Mammary epithelial cell (primary cell): ENCODE measurements at regions of chr1 and their contacts with region 1.

Region 1: GRCh38 chr1:31789259-31790065 is 25.3 kb upstream of the ADGRB2 start:
- DNase-seq: peak; percentile 75
- H3K4me3 ChIP-seq: peak overlapping the region; percentile 52 to 66 (median 60)
- H3K27ac ChIP-seq: no peak overlapping the region
- H3K4me1 ChIP-seq: peaks cover 13% of the 10 kb centered on the region
- H3K27me3 ChIP-seq: no peaks in the 10 kb centered on the region
- CTCF ChIP-seq: peak; percentile 79 to 98

Region 2: DNA sequence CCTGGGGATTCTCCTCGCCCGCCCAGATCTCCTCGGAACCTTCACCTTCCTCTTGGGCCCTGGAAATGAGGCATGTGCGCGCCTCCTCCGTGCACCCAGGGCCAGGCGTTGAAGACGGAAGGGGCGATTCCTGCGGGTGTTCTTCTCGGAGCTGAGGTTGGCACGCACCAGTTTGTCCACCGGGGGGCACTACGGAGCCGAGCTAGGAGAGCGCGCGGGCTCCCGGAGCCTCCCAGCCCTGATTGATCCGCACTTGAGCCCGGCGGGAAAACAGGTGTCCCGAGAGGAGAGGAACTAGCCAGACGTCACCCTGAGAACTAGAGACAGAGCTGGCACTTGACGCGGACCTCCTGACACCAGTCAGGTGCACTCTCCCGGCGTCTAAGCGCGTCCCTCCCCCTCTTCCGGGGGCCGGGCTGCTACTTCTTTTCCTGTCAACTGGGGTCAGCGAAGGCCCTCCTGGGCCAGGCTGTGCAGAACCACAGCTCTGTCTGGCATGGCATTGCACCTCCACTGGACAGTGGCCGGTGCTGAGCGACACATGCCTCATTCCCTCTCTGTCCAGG is 394.8 kb before region 1 on chr1:
- CTCF ChIA-PET with region 1: no interaction called
- dilution Hi-C with region 1: no loop called
- in situ Hi-C with region 1: no loop called
- intact Hi-C with region 1: loop called (anchors 2 kb)
- DNase-seq: peak; percentile 87
- H3K4me3 ChIP-seq: no peak overlapping the region
- H3K27ac ChIP-seq: no peak overlapping the region
- H3K4me1 ChIP-seq: peaks cover 42% of the 10 kb centered on the region
- H3K27me3 ChIP-seq: no peaks in the 10 kb centered on the region
- CTCF ChIP-seq: peak; percentile 83 to 95

Region 3: DNA sequence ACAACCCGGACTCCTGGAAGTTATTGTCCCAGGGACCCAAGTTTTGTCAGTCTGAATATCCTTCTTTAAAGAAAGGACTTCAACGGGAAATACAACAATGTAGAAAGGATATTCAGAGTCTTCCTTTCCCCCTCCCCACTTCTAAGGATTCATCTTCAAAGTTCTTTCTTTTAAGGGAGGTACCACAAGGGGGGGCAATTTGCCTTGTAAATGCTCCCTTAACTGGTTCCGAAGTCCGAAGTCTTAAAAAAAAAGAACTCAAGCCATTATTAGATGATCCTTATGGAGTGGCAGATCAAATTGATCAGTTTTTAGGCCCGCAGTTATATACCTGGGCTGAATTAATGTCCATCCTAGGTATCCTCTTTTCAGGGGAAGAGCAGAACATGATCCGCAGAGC is 329.4 kb before region 1 on chr1:
- CTCF ChIA-PET with region 1: no interaction called
- dilution Hi-C with region 1: no loop called
- in situ Hi-C with region 1: no loop called
- intact Hi-C with region 1: loop called (anchors 1 kb)
- DNase-seq: no peak
- H3K4me3 ChIP-seq: no peak overlapping the region
- H3K27ac ChIP-seq: no peak overlapping the region
- H3K4me1 ChIP-seq: no peaks in the 10 kb centered on the region
- H3K27me3 ChIP-seq: no peaks in the 10 kb centered on the region
- CTCF ChIP-seq: peak in 1 of 2 donors; percentile 20

Region 4: GRCh38 chr1:31576201-31576669 is 213.2 kb before region 1 on chr1 and contains the start of gene TINAGL1:
- CTCF ChIA-PET with region 1: no interaction called
- dilution Hi-C with region 1: no loop called
- in situ Hi-C with region 1: loop called in 1 of 2 experiments (anchors 25 kb)
- intact Hi-C with region 1: loop called (anchors 5 kb)
- DNase-seq: peak; percentile 96
- H3K4me3 ChIP-seq: peak within 1 kb of the TSS; percentile 71 to 90 (median 83)
- H3K27ac ChIP-seq: peak within 1 kb of the TSS; percentile 68
- H3K4me1 ChIP-seq: peaks cover 64% of the 10 kb centered on the region
- H3K27me3 ChIP-seq: no peaks in the 10 kb centered on the region
- CTCF ChIP-seq: no peak
- total RNA-seq, gene TINAGL1: 433 to 840 TPM

Region 5: GRCh38 chr1:31694069-31694963 is 95.1 kb before region 1 on chr1:
- CTCF ChIA-PET with region 1: no interaction called
- dilution Hi-C with region 1: no loop called
- in situ Hi-C with region 1: no loop called
- intact Hi-C with region 1: no loop called
- DNase-seq: no peak
- H3K4me3 ChIP-seq: no peak overlapping the region
- H3K27ac ChIP-seq: no peak overlapping the region
- H3K4me1 ChIP-seq: peaks cover 39% of the 10 kb centered on the region
- H3K27me3 ChIP-seq: no peaks in the 10 kb centered on the region
- CTCF ChIP-seq: no peak

Region 6: DNA sequence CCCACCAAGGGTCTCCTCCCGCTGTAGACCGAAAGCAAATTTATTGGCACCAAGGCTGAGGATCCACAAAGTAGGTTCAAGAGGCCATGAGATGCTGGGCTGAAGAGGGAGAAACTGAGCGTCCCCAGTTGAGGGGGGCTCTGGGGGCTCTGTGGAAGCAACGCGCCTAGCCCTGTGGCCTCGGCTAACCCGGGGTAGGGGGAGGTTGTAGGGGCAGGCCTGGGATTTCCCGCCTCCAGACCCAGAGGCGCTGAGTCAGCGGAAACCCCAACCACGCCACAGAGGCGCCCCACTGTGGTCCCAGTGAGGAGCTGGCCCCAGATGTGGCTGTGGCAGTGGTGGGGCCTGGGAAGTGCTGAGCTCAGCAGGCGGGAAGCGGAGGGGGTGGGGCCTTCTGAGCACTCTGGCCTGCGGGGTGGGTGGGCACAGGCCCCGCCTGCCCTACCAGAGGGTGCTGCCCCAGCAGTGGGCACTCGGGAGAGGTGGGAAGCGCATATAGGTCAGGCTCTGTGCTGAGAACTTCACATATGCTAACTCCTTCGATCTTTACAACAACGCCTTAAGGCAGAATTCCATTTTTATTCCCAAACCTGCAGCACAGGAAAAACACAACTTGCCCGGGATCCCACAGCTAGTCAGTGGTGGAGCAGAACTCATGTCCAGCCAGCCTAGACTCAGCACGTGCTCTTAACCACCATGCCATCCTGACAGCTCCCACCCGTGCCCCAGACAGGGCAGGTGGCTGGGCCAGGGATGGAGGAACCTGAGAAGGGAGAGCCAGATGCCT is 84.2 kb before region 1 on chr1:
- CTCF ChIA-PET with region 1: interaction called, 21 read pairs
- dilution Hi-C with region 1: loop called (anchors 5 kb)
- in situ Hi-C with region 1: no loop called
- intact Hi-C with region 1: loop called (anchors 2 kb)
- DNase-seq: peak; percentile 63
- H3K4me3 ChIP-seq: peak overlapping the region; percentile 8 to 35 (median 10)
- H3K27ac ChIP-seq: peak overlapping the region; percentile 53
- H3K4me1 ChIP-seq: peaks cover 55% of the 10 kb centered on the region
- H3K27me3 ChIP-seq: no peaks in the 10 kb centered on the region
- CTCF ChIP-seq: peak; percentile 29 to 60

Region 7: DNA sequence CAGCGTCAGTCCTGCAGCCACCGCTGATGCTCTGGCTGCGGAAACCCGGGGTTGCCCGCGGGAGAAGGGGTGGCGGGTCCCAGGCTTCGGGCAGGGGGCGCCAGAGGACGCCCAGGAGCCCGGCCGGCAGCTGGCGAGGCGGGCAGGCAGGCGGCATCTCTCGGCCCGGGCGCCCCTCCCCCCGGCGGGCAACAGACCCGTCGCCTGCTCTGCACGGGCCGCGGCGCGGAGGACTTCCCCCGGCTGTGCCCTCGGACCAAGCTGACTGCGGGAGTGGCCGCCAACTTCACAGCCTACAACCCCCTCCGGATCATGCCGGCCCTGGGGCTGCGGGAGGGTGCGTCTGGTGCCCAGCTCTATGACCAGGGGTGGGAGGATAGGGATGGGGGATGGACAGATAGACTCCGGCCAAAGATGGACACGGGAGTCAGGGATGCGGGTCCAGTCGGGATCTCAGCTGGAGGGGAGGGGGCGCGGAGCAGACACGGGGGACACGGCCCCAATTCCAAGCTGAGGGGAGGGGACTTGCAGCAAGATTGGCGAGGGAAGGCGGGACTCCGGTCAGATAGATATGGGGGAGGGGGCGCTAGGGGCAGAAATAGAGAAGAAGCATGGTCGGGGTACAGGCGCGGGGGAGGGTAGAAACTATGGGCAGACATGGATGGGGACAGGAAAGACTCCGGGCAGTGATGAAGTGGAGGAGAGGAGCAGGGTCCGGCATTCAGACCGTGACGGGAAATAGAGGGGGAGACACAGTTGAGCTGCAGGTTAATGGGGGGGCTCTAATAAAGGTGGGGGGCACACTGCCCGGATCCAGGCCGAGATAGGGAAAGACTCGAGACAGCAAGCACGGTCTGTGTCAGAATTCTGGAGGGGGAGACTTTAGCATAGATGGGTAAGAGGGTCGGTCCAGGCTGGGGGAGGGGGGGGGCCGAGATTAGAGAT is 26.5 kb before region 1 on chr1:
- CTCF ChIA-PET with region 1: interaction called, 3 read pairs
- dilution Hi-C with region 1: no loop called
- in situ Hi-C with region 1: no loop called
- intact Hi-C with region 1: loop called (anchors 1 kb)
- DNase-seq: peak; percentile 43
- H3K4me3 ChIP-seq: peak overlapping the region; percentile 29 to 48 (median 32)
- H3K27ac ChIP-seq: no peak overlapping the region
- H3K4me1 ChIP-seq: peaks cover 38% of the 10 kb centered on the region
- H3K27me3 ChIP-seq: no peaks in the 10 kb centered on the region
- CTCF ChIP-seq: peak; percentile 25 to 62